ENCODE measurements at regions of chr9 and their contacts with region 1.

Region 1: GRCh38 chr9:34178520-34179212 is at the start of gene UBAP1:
- DNase-seq: peak; percentile 97 to 98
- ATAC-seq: peak; percentile 95 to 99
- H3K4me3 ChIP-seq: peak within 1 kb of the TSS; percentile 88
- H3K27ac ChIP-seq: peak within 1 kb of the TSS; percentile 93 to 94
- H3K4me1 ChIP-seq: peaks cover 13% of the 10 kb centered on the region
- CTCF ChIP-seq: no peak
- EP300 ChIP-seq: no peak
- POLR2A ChIP-seq: peak; percentile 90
- RAD21 ChIP-seq: no peak; a peak in 1 of 5 replicates
- polyA plus RNA-seq, gene UBAP1: 73.1 and 86.7 TPM in 2 replicates

Region 2: DNA sequence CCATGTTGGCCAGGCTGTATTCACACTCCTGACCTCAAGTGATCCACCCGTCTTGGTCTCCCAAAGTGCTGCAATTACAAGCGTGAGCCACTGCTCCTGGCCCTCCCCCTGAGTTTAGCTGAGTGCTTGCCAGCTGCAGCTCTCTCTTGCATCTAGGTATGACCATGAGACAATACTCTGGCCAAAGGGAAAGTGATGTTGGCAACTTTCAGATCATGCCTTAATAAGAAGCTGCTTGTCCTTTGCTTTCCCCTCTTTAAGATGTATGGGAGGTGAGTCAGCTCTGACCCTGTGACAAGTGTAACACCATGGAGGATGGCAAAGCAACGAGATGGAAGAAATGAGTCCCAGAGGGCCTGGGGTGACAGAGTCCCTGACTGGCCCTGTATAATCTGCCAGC is 33.5 kb before region 1 on chr9:
- CTCF ChIA-PET with region 1: interaction called, 5 read pairs
- POLR2A ChIA-PET with region 1: interaction called, 12 read pairs
- DNase-seq: peak in 1 of 2 experiments; percentile 29
- ATAC-seq: peak; percentile 63 to 68; a peak in 4 of 6 replicates
- H3K4me3 ChIP-seq: no peak overlapping the region
- H3K27ac ChIP-seq: peak overlapping the region in 1 of 2 experiments; percentile 35; a peak in 2 of 6 replicates
- H3K4me1 ChIP-seq: peaks cover 20% of the 10 kb centered on the region; the same call in 2 of the 3 replicates
- CTCF ChIP-seq: no peak
- EP300 ChIP-seq: no peak
- POLR2A ChIP-seq: no peak
- RAD21 ChIP-seq: no peak

Region 3: DNA sequence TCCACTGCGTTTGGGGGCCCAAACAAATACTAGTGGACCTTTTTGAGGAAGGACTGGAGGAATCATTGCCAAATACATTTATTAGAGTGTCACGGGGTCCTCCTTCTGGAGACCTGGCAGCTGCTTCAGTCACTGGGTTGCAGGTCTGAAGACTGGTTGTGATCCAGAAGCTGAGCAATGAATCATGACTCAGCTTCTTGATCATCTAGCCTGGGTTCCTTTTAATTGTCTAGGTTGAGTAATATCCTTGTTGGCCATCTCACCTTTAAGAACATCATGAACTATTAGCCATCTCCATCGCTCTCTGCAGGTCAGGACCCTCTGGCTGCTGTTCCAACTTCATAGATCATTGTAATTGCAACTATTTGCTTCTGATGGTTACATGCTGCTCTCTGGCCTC is 15.2 kb before region 1 on chr9:
- CTCF ChIA-PET with region 1: interaction called, 4 read pairs
- POLR2A ChIA-PET with region 1: interaction called, 14 read pairs
- DNase-seq: peak; percentile 43 to 84
- ATAC-seq: peak; percentile 59 to 62; a peak in 4 of 6 replicates
- H3K4me3 ChIP-seq: no peak overlapping the region; the same call in 2 of the 3 replicates
- H3K27ac ChIP-seq: peak overlapping the region; percentile 84 to 94
- H3K4me1 ChIP-seq: peaks cover 46% of the 10 kb centered on the region
- CTCF ChIP-seq: no peak
- EP300 ChIP-seq: peak in 1 of 2 experiments; percentile 26; a peak in 1 of 5 replicates
- POLR2A ChIP-seq: no peak
- RAD21 ChIP-seq: peak in 1 of 2 experiments; percentile 6; a peak in 1 of 5 replicates

Measured in A549 (cell line).